ENCODE measurements at regions of chr3 and their contacts with region 1.

Region 1: DNA sequence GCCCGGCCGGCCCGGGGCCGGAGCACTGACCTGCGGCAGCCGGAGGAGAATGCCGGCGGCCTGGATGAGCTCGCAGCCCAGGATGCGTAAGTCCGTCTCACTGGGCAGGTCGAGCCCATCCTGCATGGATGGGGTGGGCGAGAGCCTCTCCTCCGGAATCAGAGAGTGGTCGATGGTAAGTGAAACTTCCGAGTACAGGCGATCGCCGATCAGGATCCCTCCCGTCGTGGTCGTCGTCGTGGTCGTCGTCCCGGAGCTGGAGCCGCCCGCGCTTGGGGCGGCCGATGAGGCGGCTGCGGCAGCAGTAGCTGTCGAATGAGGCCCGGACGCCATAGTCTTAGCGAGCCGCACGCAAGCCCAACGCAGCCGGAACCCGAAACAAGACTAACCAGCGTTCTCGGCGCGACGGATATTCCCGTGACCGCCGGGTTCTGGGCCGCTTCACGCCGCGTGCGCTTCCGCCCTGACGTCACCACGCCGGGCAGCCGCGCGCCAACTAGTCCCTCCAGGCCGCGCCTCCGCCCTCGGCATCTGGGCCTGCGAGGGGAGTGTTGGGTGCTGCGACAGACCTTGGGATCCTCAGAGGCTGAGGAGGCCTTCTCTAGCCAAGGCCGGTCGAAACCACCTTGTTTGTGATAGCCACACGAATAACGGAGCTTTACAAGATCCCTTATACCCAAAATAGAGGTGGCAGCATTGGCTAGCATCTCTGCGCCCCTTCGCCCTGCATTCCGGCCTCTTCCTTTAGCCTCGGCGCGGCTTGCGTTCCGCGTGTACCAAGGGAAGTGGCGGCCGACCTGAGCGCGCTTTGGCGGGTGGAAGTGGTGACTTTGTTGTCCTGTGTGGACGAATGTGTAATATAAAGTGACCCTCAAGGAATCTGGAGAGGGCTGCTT is at the start of gene CCNL1:
- DNase-seq: peak; percentile 93 to 97 (median 96)
- H3K4me3 ChIP-seq: peak within 1 kb of the TSS; percentile 87 to 97
- H3K4me3 Mint-ChIP-seq: peak within 1 kb of the TSS; percentile 92 to 99 (median 96)
- H3K27ac ChIP-seq: peak within 1 kb of the TSS; percentile 100
- H3K27ac Mint-ChIP-seq: peak within 1 kb of the TSS; percentile 99 to 100 (median 100)
- H3K4me1 ChIP-seq: peaks cover 57% of the 10 kb centered on the region
- H3K4me1 Mint-ChIP-seq: peaks cover 37 to 64% (median 51%) of the 10 kb centered on the region in 4 donors
- H3K27me3 ChIP-seq: no peaks in the 10 kb centered on the region
- H3K27me3 Mint-ChIP-seq: no peaks in the 10 kb centered on the region
- total RNA-seq, gene CCNL1: 327 to 330 TPM

Region 2: GRCh38 chr3:155870133-155870944 is 1289.7 kb before region 1 on chr3 and contains the start of gene GMPS:
- CTCF ChIA-PET with region 1: no interaction called
- POLR2A ChIA-PET with region 1: interaction called, 14 read pairs
- intact Hi-C with region 1: no loop called
- DNase-seq: peak; percentile 93 to 98 (median 96)
- H3K4me3 ChIP-seq: peak within 1 kb of the TSS; percentile 74 to 96
- H3K4me3 Mint-ChIP-seq: peak within 1 kb of the TSS; percentile 93 to 100 (median 97)
- H3K27ac ChIP-seq: peak within 1 kb of the TSS; percentile 83
- H3K27ac Mint-ChIP-seq: peak within 1 kb of the TSS; percentile 95 to 99 (median 98)
- H3K4me1 ChIP-seq: peaks cover 36% of the 10 kb centered on the region
- H3K4me1 Mint-ChIP-seq: peaks cover 11 to 44% (median 25%) of the 10 kb centered on the region in 4 donors
- H3K27me3 ChIP-seq: no peaks in the 10 kb centered on the region
- H3K27me3 Mint-ChIP-seq: no peaks in the 10 kb centered on the region
- total RNA-seq, gene GMPS: 50.5 to 53.2 TPM

Region 3: GRCh38 chr3:156816800-156817645 is 343.0 kb before region 1 on chr3:
- CTCF ChIA-PET with region 1: no interaction called
- POLR2A ChIA-PET with region 1: interaction called, 16 read pairs
- intact Hi-C with region 1: no loop called
- DNase-seq: peak; percentile 79 to 85 (median 84)
- H3K4me3 ChIP-seq: peak overlapping the region; percentile 43 to 59
- H3K4me3 Mint-ChIP-seq: peak overlapping the region; percentile 91 to 97 (median 96)
- H3K27ac ChIP-seq: peak overlapping the region; percentile 73
- H3K27ac Mint-ChIP-seq: peak overlapping the region; percentile 91 to 98 (median 94)
- H3K4me1 ChIP-seq: peaks cover 39% of the 10 kb centered on the region
- H3K4me1 Mint-ChIP-seq: peaks cover 22 to 45% (median 35%) of the 10 kb centered on the region in 4 donors
- H3K27me3 ChIP-seq: no peaks in the 10 kb centered on the region
- H3K27me3 Mint-ChIP-seq: no peaks in the 10 kb centered on the region

Region 4: GRCh38 chr3:156952011-156952410 is 208.0 kb before region 1 on chr3:
- CTCF ChIA-PET with region 1: no interaction called
- POLR2A ChIA-PET with region 1: no interaction called
- intact Hi-C with region 1: no loop called
- DNase-seq: no peak
- H3K4me3 ChIP-seq: no peak overlapping the region
- H3K4me3 Mint-ChIP-seq: no peak overlapping the region
- H3K27ac ChIP-seq: no peak overlapping the region
- H3K27ac Mint-ChIP-seq: no peak overlapping the region
- H3K4me1 ChIP-seq: no peaks in the 10 kb centered on the region
- H3K4me1 Mint-ChIP-seq: no peaks in the 10 kb centered on the region
- H3K27me3 ChIP-seq: no peaks in the 10 kb centered on the region
- H3K27me3 Mint-ChIP-seq: peaks cover 4 to 8% of the 10 kb centered on the region in 2 donors

Region 5: DNA sequence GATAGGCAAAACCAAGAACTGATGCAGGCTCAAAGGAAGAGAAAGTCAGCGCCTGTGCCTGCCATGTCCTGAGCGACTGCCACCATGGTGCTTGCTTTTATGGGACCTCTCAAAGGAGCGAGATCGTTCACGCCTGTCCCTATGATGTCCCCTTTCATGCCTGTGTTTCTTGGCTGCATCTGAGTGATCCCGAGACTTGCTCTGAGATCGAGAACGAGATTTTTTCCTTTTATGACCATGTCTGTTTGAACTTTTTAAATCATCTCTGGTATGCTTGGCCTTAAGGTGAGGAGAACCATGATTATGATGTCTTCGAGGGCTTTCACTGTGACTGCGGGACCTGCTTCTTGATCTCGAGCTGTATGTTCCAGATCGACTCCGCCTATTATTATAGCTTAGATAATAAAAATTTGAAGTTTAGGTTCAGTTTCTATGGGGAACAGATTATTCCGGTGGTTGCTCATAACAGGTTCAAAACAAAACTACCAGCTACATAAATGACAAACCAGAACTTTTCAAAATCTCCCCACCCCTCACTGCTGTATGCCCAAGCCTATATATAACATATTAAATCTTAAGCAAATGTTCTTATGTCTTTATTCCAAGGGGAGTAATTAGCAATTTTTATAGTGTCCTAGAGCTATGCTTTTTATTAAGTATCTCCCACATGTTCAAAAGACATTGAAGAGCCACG is 11.7 kb before region 1 on chr3:
- CTCF ChIA-PET with region 1: interaction called, 5 read pairs
- POLR2A ChIA-PET with region 1: interaction called, 42 read pairs
- intact Hi-C with region 1: no loop called
- DNase-seq: no peak
- H3K4me3 ChIP-seq: no peak overlapping the region
- H3K4me3 Mint-ChIP-seq: no peak overlapping the region
- H3K27ac ChIP-seq: peak overlapping the region; percentile 12
- H3K27ac Mint-ChIP-seq: peak overlapping the region; percentile 68 to 88 (median 75)
- H3K4me1 ChIP-seq: peaks cover 31% of the 10 kb centered on the region
- H3K4me1 Mint-ChIP-seq: peaks cover 19 to 47% (median 29%) of the 10 kb centered on the region in 4 donors
- H3K27me3 ChIP-seq: no peaks in the 10 kb centered on the region
- H3K27me3 Mint-ChIP-seq: no peaks in the 10 kb centered on the region

Region 6: DNA sequence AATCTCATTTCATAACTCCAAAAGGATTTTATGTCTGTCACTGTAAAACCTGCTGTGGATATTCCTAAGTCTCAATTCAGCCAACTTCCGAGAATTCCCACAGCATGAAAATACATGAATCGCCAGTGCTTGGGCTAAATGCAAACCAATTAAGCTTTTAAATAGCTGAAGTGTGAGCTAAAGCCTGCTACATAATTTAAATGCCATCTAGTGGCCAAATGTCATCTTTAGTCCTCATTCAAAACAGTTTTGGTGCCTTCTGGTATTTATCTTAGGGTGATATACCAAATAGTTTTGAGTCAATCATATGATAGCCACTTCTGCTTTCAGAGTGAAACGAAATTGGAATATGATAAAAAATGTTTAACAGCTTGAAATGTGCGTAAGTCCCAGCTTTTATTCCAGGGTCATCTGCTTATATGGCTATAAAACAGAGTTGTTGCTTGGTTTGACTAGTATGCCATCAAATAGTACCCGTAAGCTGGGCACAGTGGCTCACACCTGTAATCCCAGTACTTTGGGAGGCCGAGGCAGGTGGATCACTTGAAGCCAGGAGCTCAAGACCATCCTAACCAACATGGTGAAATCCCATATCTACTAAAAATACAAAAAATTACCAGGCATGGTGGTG is 41.8 kb after region 1 on chr3:
- CTCF ChIA-PET with region 1: interaction called, 22 read pairs
- POLR2A ChIA-PET with region 1: interaction called, 18 read pairs
- intact Hi-C with region 1: loop called (anchors 1 kb)
- DNase-seq: peak in 3 of 5 donors; percentile 11 to 26 (median 23)
- H3K4me3 ChIP-seq: no peak overlapping the region
- H3K4me3 Mint-ChIP-seq: no peak overlapping the region
- H3K27ac ChIP-seq: no peak overlapping the region
- H3K27ac Mint-ChIP-seq: no peak overlapping the region
- H3K4me1 ChIP-seq: no peaks in the 10 kb centered on the region
- H3K4me1 Mint-ChIP-seq: no peaks in the 10 kb centered on the region
- H3K27me3 ChIP-seq: no peaks in the 10 kb centered on the region
- H3K27me3 Mint-ChIP-seq: no peaks in the 10 kb centered on the region

Region 7: GRCh38 chr3:157261000-157261399 is 101.0 kb after region 1 on chr3:
- CTCF ChIA-PET with region 1: no interaction called
- POLR2A ChIA-PET with region 1: no interaction called
- intact Hi-C with region 1: no loop called
- DNase-seq: no peak
- H3K4me3 ChIP-seq: no peak overlapping the region
- H3K4me3 Mint-ChIP-seq: no peak overlapping the region
- H3K27ac ChIP-seq: no peak overlapping the region
- H3K27ac Mint-ChIP-seq: no peak overlapping the region
- H3K4me1 ChIP-seq: no peaks in the 10 kb centered on the region
- H3K4me1 Mint-ChIP-seq: no peaks in the 10 kb centered on the region
- H3K27me3 ChIP-seq: no peaks in the 10 kb centered on the region
- H3K27me3 Mint-ChIP-seq: no peaks in the 10 kb centered on the region

Measured in CD4-positive, alpha-beta memory T cell (primary cell).